IMR-90 (cell line): ENCODE measurements at regions of chr6 and their contacts with region 1.

Region 1: DNA sequence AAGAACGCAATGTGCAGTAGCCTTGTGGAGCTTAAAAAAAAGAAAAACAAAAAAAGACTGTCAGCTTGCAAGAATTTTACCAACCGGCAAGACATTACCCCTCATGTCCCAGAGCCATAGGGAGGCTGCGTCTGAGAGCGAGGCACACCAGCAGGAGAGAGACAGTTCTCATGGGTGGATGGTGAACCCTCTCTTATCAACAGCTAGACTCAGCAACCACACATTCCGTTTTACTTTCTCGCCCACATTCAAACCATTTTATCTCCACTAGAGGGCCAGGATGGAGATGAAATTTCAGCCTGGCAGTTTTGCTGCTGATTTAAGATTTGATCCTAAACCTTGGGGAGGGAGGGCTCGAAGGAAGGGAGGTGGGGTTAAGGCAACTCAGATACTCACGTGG is 247.0 kb downstream of the ATXN1 start:
- DNase-seq: peak; percentile 76
- ATAC-seq: peak; percentile 76
- H3K4me3 ChIP-seq: no peak overlapping the region
- H3K27ac ChIP-seq: no peak overlapping the region
- H3K4me1 ChIP-seq: peaks cover 5% of the 10 kb centered on the region; the same call in 1 of the 2 replicates
- H3K27me3 ChIP-seq: no peaks in the 10 kb centered on the region
- CTCF ChIP-seq: peak; percentile 66
- POLR2A ChIP-seq: no peak
- RAD21 ChIP-seq: peak; percentile 77

Region 2: DNA sequence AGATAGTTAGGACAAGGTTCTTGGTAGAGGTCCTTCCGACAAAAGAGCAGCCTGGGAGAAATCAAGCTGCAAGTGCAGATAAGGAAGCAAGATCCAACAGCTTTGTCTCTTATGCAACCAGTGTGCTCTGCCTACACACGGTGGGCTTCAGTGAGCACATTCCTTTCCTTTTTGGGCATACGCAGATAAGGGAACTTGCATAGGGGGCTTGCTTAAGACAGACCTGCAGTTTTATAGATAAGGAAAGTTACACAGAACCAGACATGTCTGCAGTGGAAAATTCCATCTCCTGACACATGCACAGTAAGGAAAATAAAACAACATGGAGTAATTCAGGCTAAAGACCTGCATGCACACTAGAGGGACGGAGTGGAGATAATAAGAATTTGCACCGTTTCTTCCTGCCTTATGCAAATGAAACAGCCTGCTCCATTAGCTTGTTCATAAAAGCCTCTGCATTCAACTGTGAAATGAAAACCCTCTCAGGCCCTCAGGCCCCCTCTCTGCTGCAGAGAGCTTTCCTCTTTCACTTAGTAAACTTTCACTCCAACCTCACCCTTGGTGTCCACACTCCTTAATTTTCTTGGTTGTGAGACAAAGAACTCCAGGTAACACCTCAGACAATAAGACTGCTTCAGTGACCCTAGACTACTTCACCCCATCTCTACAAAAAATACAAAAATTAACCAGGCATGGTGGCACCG is 482.8 kb before region 1 on chr6:
- CTCF ChIA-PET with region 1: no interaction called
- POLR2A ChIA-PET with region 1: no interaction called
- dilution Hi-C with region 1: no loop called
- in situ Hi-C with region 1: no loop called
- intact Hi-C with region 1: no loop called
- DNase-seq: no peak
- ATAC-seq: no peak
- H3K4me3 ChIP-seq: no peak overlapping the region
- H3K27ac ChIP-seq: no peak overlapping the region
- H3K4me1 ChIP-seq: no peaks in the 10 kb centered on the region
- H3K27me3 ChIP-seq: peaks cover 6% of the 10 kb centered on the region
- CTCF ChIP-seq: no peak
- POLR2A ChIP-seq: no peak
- RAD21 ChIP-seq: no peak

Region 3: GRCh38 chr6:16403831-16404230 is 110.4 kb before region 1 on chr6:
- CTCF ChIA-PET with region 1: interaction called, 6 read pairs
- POLR2A ChIA-PET with region 1: no interaction called
- dilution Hi-C with region 1: no loop called
- in situ Hi-C with region 1: no loop called
- intact Hi-C with region 1: loop called (anchors 5 kb)
- DNase-seq: peak; percentile 27
- ATAC-seq: peak; percentile 40
- H3K4me3 ChIP-seq: no peak overlapping the region
- H3K27ac ChIP-seq: peak overlapping the region; percentile 48; the same call in 1 of the 2 replicates
- H3K4me1 ChIP-seq: peaks cover 40% of the 10 kb centered on the region
- H3K27me3 ChIP-seq: no peaks in the 10 kb centered on the region
- CTCF ChIP-seq: peak; percentile 53
- POLR2A ChIP-seq: no peak
- RAD21 ChIP-seq: peak; percentile 53

Region 4: DNA sequence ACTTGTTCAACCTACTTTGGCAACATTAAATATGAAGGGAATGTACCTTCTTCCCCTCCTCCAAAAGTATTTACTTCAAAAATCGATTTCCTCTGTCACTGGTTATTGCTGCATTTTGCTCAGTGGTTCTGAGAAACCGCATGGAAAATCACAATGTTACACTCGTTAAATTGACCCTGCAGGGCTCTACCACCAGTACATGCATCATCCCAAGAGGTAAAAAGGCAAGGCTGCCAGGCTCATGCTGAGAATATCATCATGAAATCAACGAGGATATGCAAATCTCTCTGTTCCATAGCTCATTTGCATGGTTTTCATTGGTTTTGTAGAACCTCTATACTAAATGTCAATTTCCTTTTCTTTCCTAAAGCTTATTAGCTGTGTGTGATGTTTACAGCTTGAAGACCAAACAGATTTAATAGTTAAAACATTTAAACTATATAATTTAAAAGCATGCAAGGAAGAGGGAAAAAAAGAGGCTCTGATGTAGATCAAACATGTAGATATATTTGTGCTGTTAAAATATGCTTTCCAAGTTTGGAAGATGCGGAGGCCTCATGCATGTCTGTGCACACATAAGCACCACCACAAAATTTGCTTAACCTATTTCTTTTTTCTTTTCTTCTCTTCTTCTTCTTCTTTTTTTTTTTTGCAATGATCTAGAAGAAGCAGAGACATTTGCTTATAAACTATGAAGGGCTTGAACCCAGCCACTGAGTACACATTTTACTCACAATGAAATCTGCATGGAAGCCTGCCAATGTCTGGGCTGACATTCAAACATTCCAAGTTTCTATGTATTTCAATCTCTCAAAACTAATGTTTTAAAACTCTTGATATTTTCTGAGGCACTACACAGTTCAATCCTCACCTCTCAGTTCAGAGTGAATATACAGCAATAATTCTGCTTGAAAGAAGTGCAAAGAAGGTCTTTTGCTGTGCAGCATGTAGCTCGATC is 81.9 kb before region 1 on chr6:
- CTCF ChIA-PET with region 1: no interaction called
- POLR2A ChIA-PET with region 1: no interaction called
- dilution Hi-C with region 1: no loop called
- in situ Hi-C with region 1: no loop called
- intact Hi-C with region 1: loop called (anchors 5 kb)
- DNase-seq: peak; percentile 83
- ATAC-seq: peak; percentile 61
- H3K4me3 ChIP-seq: no peak overlapping the region
- H3K27ac ChIP-seq: no peak overlapping the region
- H3K4me1 ChIP-seq: peaks cover 17% of the 10 kb centered on the region
- H3K27me3 ChIP-seq: no peaks in the 10 kb centered on the region
- CTCF ChIP-seq: no peak
- POLR2A ChIP-seq: no peak
- RAD21 ChIP-seq: no peak